ENCODE measurements at regions of chr18 and their contacts with region 1.

Region 1: GRCh38 chr18:58321986-58322385 is 278.0 kb downstream of the NEDD4L start:
- DNase-seq: peak; percentile 61 to 74
- H3K4me3 ChIP-seq: no peak overlapping the region
- H3K27ac ChIP-seq: peak overlapping the region in 1 of 3 donors; percentile 15
- H3K4me1 ChIP-seq: peaks cover 9 to 27% of the 10 kb centered on the region in 2 donors
- H3K27me3 ChIP-seq: no peaks in the 10 kb centered on the region
- CTCF ChIP-seq: peak; percentile 19 to 81 (median 54)
- POLR2A ChIP-seq: no peak

Region 2: GRCh38 chr18:57898506-57899124 is 423.4 kb before region 1 on chr18:
- intact Hi-C with region 1: no loop called
- DNase-seq: no peak
- H3K4me3 ChIP-seq: no peak overlapping the region
- H3K27ac ChIP-seq: no peak overlapping the region
- H3K4me1 ChIP-seq: peaks cover 0 to 3% of the 10 kb centered on the region in 2 donors
- H3K27me3 ChIP-seq: no peaks in the 10 kb centered on the region
- CTCF ChIP-seq: no peak
- POLR2A ChIP-seq: no peak

Region 3: DNA sequence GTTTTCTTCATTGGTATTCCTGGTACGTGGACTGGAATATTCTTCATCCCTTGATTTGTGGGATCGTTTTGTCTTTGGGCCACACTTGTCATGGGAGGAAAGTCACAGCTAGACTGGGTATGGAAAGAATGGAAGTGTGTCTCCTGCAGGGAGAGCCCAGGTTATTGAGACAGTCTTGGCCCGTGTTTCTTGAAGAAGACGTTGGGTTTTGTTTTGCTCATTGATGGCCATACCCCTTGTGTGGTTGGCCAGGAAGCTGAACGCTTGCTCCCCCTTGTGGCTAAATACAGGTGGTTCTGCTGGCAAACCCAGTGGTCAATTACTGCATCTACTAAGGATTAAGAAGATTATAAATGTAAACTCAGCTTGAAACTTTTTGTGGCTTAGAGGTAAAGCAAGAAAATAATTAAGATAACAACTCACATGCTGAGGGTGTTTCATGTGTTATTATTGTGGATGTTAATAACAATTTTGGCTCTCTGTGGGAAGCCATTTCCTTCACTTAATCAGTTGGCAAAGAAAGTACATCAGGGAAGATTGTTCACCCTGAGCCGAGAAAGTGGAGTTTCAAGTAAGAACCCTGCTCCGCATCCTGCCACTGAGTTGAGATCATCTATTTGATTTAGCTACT is 186.2 kb before region 1 on chr18:
- intact Hi-C with region 1: loop called (anchors 10 kb)
- DNase-seq: peak; percentile 56 to 62
- H3K4me3 ChIP-seq: no peak overlapping the region
- H3K27ac ChIP-seq: peak overlapping the region in 2 of 3 donors; percentile 80 to 81
- H3K4me1 ChIP-seq: peaks cover 22 to 26% of the 10 kb centered on the region in 2 donors
- H3K27me3 ChIP-seq: no peaks in the 10 kb centered on the region
- CTCF ChIP-seq: peak; percentile 46 to 85 (median 76)
- POLR2A ChIP-seq: no peak

Region 4: DNA sequence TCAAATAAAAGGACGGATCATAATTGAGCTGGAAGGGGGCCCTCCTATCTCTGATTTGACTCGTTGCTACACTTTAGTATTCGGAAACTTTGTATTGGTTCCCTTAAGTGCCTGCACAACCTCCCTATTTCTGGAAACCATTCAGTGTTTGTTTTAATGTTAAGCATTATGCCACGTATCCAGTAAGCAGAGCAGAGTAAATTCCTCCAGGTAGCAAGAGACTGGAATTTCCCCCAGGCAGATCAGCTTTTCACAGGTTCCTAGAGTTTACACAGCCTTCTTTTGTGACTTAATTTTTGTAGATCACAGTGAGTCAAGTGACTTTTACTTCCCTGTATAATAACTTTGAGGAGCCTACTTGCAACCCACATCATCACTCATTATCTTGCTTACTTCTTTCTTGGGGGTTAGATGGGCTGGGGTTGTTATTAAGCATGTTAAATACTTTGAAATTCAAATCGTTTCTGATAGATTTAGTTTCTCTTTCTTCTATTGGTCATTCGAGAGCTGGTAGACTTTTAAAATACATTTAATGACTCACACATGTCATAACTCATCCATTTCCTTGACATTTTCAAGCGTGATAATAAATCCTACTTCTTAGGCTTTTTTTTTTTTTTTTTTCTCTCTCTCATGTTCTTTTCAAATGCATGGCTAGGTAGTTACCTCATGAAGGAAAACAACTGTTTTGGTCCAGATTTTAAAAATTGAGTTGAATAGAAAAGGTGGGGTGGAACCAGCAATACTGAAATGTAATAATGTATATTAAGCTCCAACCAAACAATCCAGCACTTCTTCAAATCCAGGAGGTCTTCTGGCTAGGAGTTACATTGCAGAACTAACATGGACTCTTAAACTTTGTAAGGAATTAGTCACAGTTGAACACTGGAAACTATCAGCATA is 58.7 kb before region 1 on chr18:
- intact Hi-C with region 1: no loop called
- DNase-seq: peak in 1 of 2 donors; percentile 29
- H3K4me3 ChIP-seq: no peak overlapping the region
- H3K27ac ChIP-seq: peak overlapping the region; percentile 74 to 93 (median 89)
- H3K4me1 ChIP-seq: peaks cover 33 to 35% of the 10 kb centered on the region in 2 donors
- H3K27me3 ChIP-seq: no peaks in the 10 kb centered on the region
- CTCF ChIP-seq: no peak
- POLR2A ChIP-seq: peak in 1 of 2 donors; percentile 49

Region 5: GRCh38 chr18:58578835-58579560 is 257.0 kb after region 1 on chr18:
- intact Hi-C with region 1: no loop called
- DNase-seq: no peak
- H3K4me3 ChIP-seq: no peak overlapping the region
- H3K27ac ChIP-seq: no peak overlapping the region
- H3K4me1 ChIP-seq: no peaks in the 10 kb centered on the region
- H3K27me3 ChIP-seq: no peaks in the 10 kb centered on the region
- CTCF ChIP-seq: no peak
- POLR2A ChIP-seq: no peak